ENCODE measurements at regions of chr6 and their contacts with region 1.

Region 1: DNA sequence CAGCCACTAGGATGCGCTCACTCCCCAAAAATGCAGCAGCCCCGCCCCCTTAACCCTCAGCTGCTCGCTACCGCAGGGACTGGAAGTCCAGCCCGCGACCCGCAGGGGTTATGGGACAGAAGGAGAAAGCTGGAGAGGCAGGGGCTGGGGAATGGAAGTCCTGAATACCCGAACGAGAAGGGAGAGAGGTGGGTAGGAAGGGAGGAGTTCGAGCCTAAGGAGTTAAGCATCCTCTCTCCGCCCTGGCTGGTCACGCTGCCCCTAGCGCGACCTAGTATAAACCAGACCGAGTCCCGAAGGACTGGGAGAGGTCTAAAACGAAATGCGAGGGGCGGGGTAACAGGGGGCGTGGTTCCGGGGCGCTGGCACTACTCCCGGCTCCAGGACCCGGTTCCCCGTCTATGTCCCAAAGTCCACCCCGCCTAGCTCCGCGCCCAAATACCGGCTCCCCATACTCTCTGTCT is 448 bp upstream of the DDAH2 start:
- DNase-seq: peak; percentile 90
- H3K4me3 ChIP-seq: peak overlapping the region; percentile 66 to 94 (median 70)
- H3K27ac ChIP-seq: peak overlapping the region; percentile 54
- H3K4me1 ChIP-seq: peaks cover 37% of the 10 kb centered on the region
- H3K27me3 ChIP-seq: no peaks in the 10 kb centered on the region
- CTCF ChIP-seq: peak in 1 of 2 donors; percentile 73
- POLR2A ChIP-seq: no peak

Region 2: GRCh38 chr6:31702819-31703522 is 26.6 kb before region 1 on chr6 and contains the start of gene ABHD16A:
- CTCF ChIA-PET with region 1: interaction called, 9 read pairs
- POLR2A ChIA-PET with region 1: interaction called, 3 read pairs
- dilution Hi-C with region 1: no loop called
- intact Hi-C with region 1: loop called (anchors 2 kb)
- DNase-seq: peak; percentile 99
- H3K4me3 ChIP-seq: peak within 1 kb of the TSS; percentile 59 to 80 (median 74)
- H3K27ac ChIP-seq: peak within 1 kb of the TSS; percentile 77
- H3K4me1 ChIP-seq: peaks cover 11% of the 10 kb centered on the region
- H3K27me3 ChIP-seq: no peaks in the 10 kb centered on the region
- CTCF ChIP-seq: peak in 1 of 2 donors; percentile 3
- POLR2A ChIP-seq: peak; percentile 97
- total RNA-seq, gene ABHD16A: 41.3 and 48.9 TPM in 2 replicates

Region 3: DNA sequence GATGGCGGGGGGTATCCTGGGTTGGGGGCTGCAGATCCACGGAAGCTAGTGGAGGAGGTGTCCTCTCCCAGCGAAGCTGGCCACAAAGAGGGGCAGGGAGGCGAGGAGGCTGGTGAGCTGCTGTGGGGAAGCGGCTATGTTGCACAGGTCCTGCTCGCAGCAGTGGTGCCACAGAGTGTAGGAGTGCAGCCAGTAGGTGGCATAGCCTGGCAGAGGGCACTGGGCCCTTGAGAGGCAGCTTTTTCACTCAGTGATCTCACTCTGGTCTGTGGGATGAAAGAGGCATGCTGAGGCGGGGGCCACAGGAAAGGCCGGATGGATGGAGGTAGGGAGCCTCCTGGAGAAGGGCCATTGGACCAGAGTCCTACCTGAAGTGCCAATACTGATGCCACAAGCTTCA is 17.3 kb before region 1 on chr6:
- CTCF ChIA-PET with region 1: interaction called, 6 read pairs
- POLR2A ChIA-PET with region 1: interaction called, 10 read pairs
- dilution Hi-C with region 1: no loop called
- intact Hi-C with region 1: no loop called
- DNase-seq: no peak
- H3K4me3 ChIP-seq: no peak overlapping the region
- H3K27ac ChIP-seq: no peak overlapping the region
- H3K4me1 ChIP-seq: peaks cover 8% of the 10 kb centered on the region
- H3K27me3 ChIP-seq: no peaks in the 10 kb centered on the region
- CTCF ChIP-seq: peak in 1 of 2 donors; percentile 35
- POLR2A ChIP-seq: no peak

Region 4: DNA sequence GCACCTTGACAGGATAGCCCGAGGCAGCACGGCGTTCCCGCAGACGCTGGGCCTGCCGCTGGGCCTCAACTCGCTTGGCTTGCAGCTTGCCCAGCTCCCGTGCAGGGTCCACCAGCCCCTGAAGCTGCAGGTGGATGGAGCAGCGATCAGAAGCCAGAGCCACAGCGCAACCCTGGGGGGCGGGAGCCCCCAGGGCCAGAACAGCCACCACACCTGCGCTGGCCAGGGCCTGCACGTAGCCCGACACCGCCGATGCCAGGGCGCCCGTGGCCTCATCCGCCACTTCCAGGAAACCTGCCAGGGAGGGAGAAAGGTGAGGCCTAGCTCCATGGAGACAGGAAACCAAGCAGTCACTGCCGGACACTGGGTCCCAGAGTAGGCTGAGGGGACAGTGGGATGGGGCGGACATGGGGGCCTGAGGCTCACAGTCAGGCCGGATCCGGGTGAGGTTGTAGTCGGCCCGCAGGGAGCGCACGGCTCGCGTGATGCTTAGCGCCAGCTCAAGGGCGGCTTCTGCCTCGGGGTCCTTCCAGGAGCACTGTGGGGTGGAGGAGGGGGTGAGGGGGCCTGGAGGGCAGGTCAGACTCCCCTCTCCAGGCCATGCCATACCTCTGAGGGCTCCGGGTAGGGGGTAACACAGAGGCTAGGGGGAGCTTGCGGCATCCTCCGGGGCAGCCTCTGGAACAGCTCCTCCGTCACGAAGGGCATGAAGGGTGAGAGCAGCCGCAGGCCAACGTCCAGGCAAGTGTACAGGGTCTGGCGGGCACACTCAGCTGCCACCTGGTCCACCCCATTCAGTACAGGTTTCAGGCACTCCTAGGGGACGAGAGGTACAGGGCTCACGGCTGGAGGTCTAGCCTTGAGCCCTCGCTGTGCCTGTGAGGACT is 49.7 kb after region 1 on chr6:
- CTCF ChIA-PET with region 1: no interaction called
- POLR2A ChIA-PET with region 1: no interaction called
- dilution Hi-C with region 1: no loop called
- intact Hi-C with region 1: no loop called
- DNase-seq: no peak
- H3K4me3 ChIP-seq: no peak overlapping the region
- H3K27ac ChIP-seq: no peak overlapping the region
- H3K4me1 ChIP-seq: peaks cover 4% of the 10 kb centered on the region
- H3K27me3 ChIP-seq: no peaks in the 10 kb centered on the region
- CTCF ChIP-seq: no peak
- POLR2A ChIP-seq: no peak